ENCODE measurements at regions of chr2 and their contacts with region 1.

Region 1: DNA sequence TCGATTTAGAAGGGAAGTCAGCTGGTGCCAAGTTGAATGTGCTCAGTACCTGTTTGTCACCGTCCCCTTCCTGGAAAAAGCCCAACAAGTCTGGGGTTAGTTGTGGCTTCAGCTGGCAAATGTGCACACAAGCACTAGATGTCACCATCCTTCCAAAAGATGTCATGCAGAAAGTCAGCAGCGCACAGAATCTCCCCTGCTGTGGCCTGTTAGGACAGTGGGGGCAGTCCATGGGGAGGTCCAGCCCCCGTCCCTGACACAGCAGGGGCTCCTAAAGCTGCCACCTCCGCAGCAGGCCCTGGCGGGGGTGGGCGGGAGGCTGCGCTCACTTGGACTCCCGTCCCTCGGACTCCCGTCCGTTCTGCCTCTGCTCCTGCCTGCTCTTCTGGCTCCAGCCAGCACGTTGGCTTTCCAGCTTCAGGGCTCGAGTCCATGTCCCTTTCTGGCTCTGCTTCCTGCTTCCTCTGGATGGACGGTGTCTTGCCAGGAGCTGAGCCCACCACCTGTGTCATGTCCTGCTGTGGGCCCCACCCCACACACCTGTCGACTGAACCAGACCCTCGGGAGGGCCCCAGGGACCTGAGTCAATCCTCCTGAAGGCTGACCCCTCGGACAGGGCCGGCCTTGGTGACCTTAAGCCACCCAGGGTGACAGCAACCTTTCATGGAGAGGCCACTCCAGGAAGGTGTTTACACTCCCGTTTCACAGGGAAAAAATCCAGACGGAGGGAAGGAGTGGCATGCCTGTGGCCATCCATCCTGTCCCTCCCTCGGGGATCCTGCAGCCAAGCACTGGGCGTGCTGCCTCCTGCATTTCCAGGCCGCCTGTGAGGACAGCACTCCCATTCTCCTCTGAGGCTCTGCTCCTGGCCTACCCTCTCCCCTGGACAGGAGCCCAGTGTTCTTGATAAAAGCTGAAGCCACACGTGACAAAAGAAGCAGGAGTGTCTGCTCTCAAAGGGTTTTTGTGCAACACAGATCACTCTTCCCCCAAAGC is 8.5 kb downstream of the RAB17 start:
- DNase-seq: peak; percentile 88
- ATAC-seq: peak; percentile 94

Region 2: DNA sequence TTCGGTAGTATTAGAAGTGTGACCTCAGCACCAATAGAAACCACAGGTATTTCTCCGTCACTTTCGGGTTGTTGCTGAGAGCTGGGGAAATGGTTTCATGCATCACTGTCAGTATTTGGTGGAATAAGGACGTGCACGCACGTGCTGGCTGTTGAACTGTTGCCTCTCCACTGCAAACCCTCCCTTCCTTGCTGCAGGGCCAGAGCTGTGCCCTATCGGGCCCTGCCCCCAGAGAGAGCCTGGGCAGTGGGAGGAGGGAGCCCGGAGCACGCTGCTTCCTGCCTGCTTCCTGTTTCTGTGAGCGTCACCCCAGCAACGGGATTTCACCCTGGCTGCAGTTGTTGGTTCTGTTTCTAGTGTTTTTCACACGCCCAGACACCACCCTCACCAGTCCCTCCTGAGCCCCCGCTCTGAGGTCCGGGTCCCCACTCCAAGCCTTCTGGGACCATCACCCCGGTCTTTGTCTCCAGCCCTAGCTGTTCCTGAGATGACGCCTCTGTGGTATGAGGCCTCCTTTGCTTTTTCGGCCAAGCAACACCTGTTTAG is 92.8 kb after region 1 on chr2:
- intact Hi-C with region 1: loop called (anchors 10 kb)
- DNase-seq: peak; percentile 93
- ATAC-seq: peak; percentile 83

Region 3: GRCh38 chr2:237744613-237745249 is 162.7 kb after region 1 on chr2:
- intact Hi-C with region 1: loop called (anchors 5 kb)
- DNase-seq: peak; percentile 89
- ATAC-seq: peak; percentile 87